HCT116 (cell line): ENCODE measurements at regions of chr12 and their contacts with region 1.

Region 1: GRCh38 chr12:33012226-33012807 is 115.7 kb upstream of the PKP2 start:
- DNase-seq: no peak
- ATAC-seq: no peak
- H3K4me3 ChIP-seq: no peak overlapping the region
- H3K27ac ChIP-seq: no peak overlapping the region
- H3K4me1 ChIP-seq: no peaks in the 10 kb centered on the region
- H3K27me3 ChIP-seq: no peaks in the 10 kb centered on the region
- CTCF ChIP-seq: no peak
- POLR2A ChIP-seq: no peak
- RAD21 ChIP-seq: no peak

Region 2: DNA sequence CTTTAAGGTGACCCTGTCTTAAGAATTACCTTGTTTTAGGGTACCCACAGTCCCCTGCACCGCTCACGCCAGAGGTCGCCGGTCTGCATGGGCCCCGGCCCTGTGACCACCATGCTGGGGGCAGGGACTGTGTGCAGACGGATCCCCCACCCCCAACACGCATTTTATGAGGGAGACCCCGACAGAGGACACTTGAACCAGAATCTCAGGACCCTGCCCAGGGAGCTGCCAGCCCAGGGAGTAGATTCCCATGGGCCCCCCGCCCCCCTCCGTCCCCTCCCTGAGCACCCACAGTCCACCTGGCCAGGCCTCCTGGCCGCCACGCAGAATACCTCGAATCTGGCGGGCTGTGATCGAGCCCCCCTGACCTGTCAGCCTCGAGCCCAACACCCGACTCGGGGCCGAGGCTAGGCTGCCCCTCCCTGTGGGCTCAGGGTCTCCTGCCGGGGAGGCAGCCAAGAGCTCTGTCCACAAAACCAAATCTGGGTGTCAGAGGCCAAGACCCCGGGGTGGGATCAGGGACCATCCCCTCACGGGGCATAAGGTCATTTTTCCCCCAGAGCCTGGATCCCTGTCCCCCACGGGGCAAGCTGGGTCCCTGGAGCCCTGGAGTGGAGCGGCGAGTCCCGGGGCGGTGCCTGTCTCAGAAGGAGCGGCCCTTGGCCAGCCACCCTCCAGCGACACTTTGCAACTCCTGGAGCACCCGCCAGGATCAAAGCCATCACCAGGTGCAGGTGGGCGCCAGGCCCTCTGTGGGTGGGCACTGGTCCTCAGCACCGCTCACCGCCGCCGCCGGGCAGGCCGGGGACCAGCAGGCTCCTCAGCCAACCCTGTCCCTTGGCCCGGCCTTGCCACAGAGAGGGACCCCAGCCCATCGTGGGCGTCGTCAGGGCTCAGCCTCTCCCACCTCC is 40.1 kb after region 1 on chr12:
- CTCF ChIA-PET with region 1: no interaction called
- POLR2A ChIA-PET with region 1: no interaction called
- RAD21 ChIA-PET with region 1: no interaction called
- intact Hi-C with region 1: loop called (anchors 5 kb)
- DNase-seq: no peak
- ATAC-seq: no peak
- H3K4me3 ChIP-seq: no peak overlapping the region
- H3K27ac ChIP-seq: no peak overlapping the region
- H3K4me1 ChIP-seq: no peaks in the 10 kb centered on the region
- H3K27me3 ChIP-seq: no peaks in the 10 kb centered on the region
- CTCF ChIP-seq: no peak
- POLR2A ChIP-seq: no peak
- RAD21 ChIP-seq: no peak